ENCODE measurements at regions of chr7 and their contacts with region 1.

Region 1: GRCh38 chr7:44847508-44847920 is 373 bp downstream of the H2AZ2 start:
- DNase-seq: peak; percentile 96
- ATAC-seq: peak; percentile 64
- H3K4me3 ChIP-seq: peak overlapping the region; percentile 67 to 97 (median 76)
- H3K4me3 Mint-ChIP-seq: peak overlapping the region; percentile 99
- H3K27ac ChIP-seq: peak overlapping the region; percentile 94
- H3K27ac Mint-ChIP-seq: peak overlapping the region; percentile 100
- H3K4me1 ChIP-seq: peaks cover 16 to 24% of the 10 kb centered on the region in 2 donors
- H3K4me1 Mint-ChIP-seq: peaks cover 31% of the 10 kb centered on the region
- H3K27me3 ChIP-seq: no peaks in the 10 kb centered on the region
- H3K27me3 Mint-ChIP-seq: no peaks in the 10 kb centered on the region
- CTCF ChIP-seq: peak; percentile 89

Region 2: GRCh38 chr7:44112231-44113000 is 735.1 kb before region 1 on chr7:
- CTCF ChIA-PET with region 1: no interaction called
- POLR2A ChIA-PET with region 1: no interaction called
- intact Hi-C with region 1: no loop called
- DNase-seq: no peak
- ATAC-seq: no peak
- H3K4me3 ChIP-seq: no peak overlapping the region
- H3K4me3 Mint-ChIP-seq: no peak overlapping the region
- H3K27ac ChIP-seq: no peak overlapping the region
- H3K27ac Mint-ChIP-seq: no peak overlapping the region
- H3K4me1 ChIP-seq: no peaks in the 10 kb centered on the region
- H3K4me1 Mint-ChIP-seq: no peaks in the 10 kb centered on the region
- H3K27me3 ChIP-seq: no peaks in the 10 kb centered on the region
- H3K27me3 Mint-ChIP-seq: no peaks in the 10 kb centered on the region
- CTCF ChIP-seq: no peak

Region 3: GRCh38 chr7:44565097-44565794 is 282.3 kb before region 1 on chr7:
- CTCF ChIA-PET with region 1: interaction called, 12 read pairs
- POLR2A ChIA-PET with region 1: no interaction called
- intact Hi-C with region 1: no loop called
- DNase-seq: peak; percentile 73
- ATAC-seq: peak; percentile 98
- H3K4me3 ChIP-seq: no peak overlapping the region
- H3K4me3 Mint-ChIP-seq: no peak overlapping the region
- H3K27ac ChIP-seq: no peak overlapping the region
- H3K27ac Mint-ChIP-seq: no peak overlapping the region
- H3K4me1 ChIP-seq: no peaks in the 10 kb centered on the region
- H3K4me1 Mint-ChIP-seq: no peaks in the 10 kb centered on the region
- H3K27me3 ChIP-seq: no peaks in the 10 kb centered on the region
- H3K27me3 Mint-ChIP-seq: no peaks in the 10 kb centered on the region
- CTCF ChIP-seq: peak; percentile 98

Region 4: GRCh38 chr7:44606450-44607254 is 240.9 kb before region 1 on chr7 and contains the start of gene OGDH:
- CTCF ChIA-PET with region 1: interaction called, 11 read pairs
- POLR2A ChIA-PET with region 1: interaction called, 13 read pairs
- intact Hi-C with region 1: loop called (anchors 1 kb)
- DNase-seq: peak; percentile 100
- ATAC-seq: peak; percentile 91
- H3K4me3 ChIP-seq: peak within 1 kb of the TSS; percentile 80 to 93 (median 85)
- H3K4me3 Mint-ChIP-seq: peak within 1 kb of the TSS; percentile 99
- H3K27ac ChIP-seq: peak within 1 kb of the TSS; percentile 87 to 96
- H3K27ac Mint-ChIP-seq: peak within 1 kb of the TSS; percentile 99
- H3K4me1 ChIP-seq: peaks cover 15 to 34% of the 10 kb centered on the region in 2 donors
- H3K4me1 Mint-ChIP-seq: peaks cover 41% of the 10 kb centered on the region
- H3K27me3 ChIP-seq: no peaks in the 10 kb centered on the region
- H3K27me3 Mint-ChIP-seq: peaks cover 4% of the 10 kb centered on the region
- CTCF ChIP-seq: no peak
- total RNA-seq, gene OGDH: 71.5 and 80.2 TPM in 2 replicates

Region 5: DNA sequence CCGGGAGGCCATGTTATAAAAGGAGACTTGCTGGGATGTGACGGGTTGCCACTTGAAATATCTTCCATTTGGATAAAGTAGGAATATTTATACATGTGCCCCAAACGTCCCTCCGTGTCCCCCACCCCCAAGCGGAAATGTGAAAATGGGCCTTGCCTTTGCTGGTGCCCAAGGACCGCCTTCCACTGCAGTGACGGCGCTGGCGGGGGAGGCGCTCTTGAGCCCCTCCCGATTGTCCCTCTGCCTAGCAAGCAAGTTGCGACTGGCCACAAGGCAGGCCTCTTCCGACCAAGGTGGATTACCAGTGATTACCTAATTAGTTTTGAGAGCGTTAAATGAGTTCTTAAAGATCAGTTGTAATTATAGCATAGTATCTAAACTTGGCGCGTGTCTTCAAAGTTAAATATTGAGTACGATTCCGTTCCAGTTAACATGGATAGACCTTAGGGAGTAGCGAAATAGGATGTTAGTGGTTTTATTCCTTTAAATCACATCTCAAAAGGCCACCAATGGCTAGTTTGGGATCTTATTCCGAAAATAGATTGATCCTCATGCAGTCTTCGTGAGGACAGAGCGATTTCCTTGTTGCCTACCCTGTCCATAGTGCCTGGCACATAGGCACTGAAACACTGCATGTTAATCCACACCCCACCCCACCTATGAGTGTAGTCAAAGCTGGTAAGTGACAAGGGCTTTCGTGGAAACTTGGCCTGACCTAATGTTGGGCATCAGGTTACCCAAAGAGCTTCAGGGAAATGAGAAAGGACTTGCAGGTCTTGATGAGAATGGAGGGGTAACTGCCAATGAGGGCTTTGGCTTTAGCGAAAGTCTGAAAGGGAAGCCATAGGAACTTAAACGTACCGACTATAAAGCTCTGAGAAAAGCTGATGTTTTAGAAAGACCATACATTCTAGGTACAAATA is 49.9 kb before region 1 on chr7:
- CTCF ChIA-PET with region 1: interaction called, 8 read pairs
- POLR2A ChIA-PET with region 1: interaction called, 7 read pairs
- intact Hi-C with region 1: loop called (anchors 1 kb)
- DNase-seq: peak; percentile 87
- ATAC-seq: peak; percentile 49
- H3K4me3 ChIP-seq: peak overlapping the region; percentile 77 to 98 (median 93)
- H3K4me3 Mint-ChIP-seq: peak overlapping the region; percentile 93
- H3K27ac ChIP-seq: peak overlapping the region; percentile 92 to 97
- H3K27ac Mint-ChIP-seq: peak overlapping the region; percentile 98
- H3K4me1 ChIP-seq: peaks cover 15 to 26% of the 10 kb centered on the region in 2 donors
- H3K4me1 Mint-ChIP-seq: peaks cover 40% of the 10 kb centered on the region
- H3K27me3 ChIP-seq: no peaks in the 10 kb centered on the region
- H3K27me3 Mint-ChIP-seq: no peaks in the 10 kb centered on the region
- CTCF ChIP-seq: peak; percentile 73

Region 6: DNA sequence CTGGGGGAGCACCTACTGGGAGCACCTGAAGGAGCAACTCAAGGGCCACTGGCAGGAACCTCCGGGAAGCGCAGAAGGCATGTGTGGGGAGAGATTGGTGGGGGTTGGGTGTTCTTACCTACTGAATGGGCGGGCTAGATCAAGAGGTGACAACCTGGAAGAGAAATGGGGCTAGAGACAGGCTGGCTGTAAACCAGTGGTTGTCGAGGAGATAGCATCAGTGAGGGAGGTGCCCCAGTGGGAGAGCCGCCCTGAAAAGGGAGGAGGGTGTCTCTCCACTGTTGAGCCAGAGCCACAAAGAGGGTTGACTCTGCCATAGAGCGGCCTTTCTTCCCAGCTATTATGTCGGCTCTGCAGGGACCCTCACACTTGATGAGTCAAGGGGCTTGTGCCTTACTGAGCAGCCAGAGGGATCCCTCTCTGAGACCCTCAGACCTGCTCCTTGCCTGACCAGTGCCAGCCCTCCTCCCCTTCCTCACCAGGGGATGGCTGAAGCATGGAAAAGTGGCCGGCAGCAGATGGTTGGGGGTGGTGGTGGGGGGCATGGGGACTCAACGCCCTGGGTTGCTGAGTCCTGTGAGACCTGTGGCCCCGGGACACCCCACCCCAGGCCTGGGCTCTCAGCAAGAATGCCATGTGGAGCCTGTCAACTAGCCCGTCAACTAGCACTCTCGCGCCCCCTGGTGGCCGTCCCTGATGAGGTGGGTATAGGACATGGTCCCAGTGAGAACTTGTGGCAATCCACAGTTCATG is 74.3 kb after region 1 on chr7:
- CTCF ChIA-PET with region 1: interaction called, 15 read pairs
- POLR2A ChIA-PET with region 1: no interaction called
- intact Hi-C with region 1: loop called (anchors 1 kb)
- DNase-seq: peak; percentile 87
- ATAC-seq: peak; percentile 98
- H3K4me3 ChIP-seq: no peak overlapping the region
- H3K4me3 Mint-ChIP-seq: no peak overlapping the region
- H3K27ac ChIP-seq: no peak overlapping the region
- H3K27ac Mint-ChIP-seq: peak overlapping the region; percentile 53
- H3K4me1 ChIP-seq: no peaks in the 10 kb centered on the region
- H3K4me1 Mint-ChIP-seq: peaks cover 2% of the 10 kb centered on the region
- H3K27me3 ChIP-seq: peaks cover 0 to 4% (median 2%) of the 10 kb centered on the region in 4 experiments
- H3K27me3 Mint-ChIP-seq: peaks cover 5% of the 10 kb centered on the region
- CTCF ChIP-seq: peak; percentile 86

Region 7: GRCh38 chr7:45111298-45112223 is 264.0 kb after region 1 on chr7 and contains the start of gene TBRG4:
- CTCF ChIA-PET with region 1: no interaction called
- POLR2A ChIA-PET with region 1: interaction called, 6 read pairs
- intact Hi-C with region 1: loop called (anchors 1 kb)
- DNase-seq: peak; percentile 96
- ATAC-seq: peak; percentile 94
- H3K4me3 ChIP-seq: peak within 1 kb of the TSS; percentile 67 to 93 (median 72)
- H3K4me3 Mint-ChIP-seq: peak within 1 kb of the TSS; percentile 91
- H3K27ac ChIP-seq: peak within 1 kb of the TSS; percentile 91 to 98
- H3K27ac Mint-ChIP-seq: peak within 1 kb of the TSS; percentile 95
- H3K4me1 ChIP-seq: peaks cover 22 to 38% of the 10 kb centered on the region in 2 donors
- H3K4me1 Mint-ChIP-seq: peaks cover 40% of the 10 kb centered on the region
- H3K27me3 ChIP-seq: no peaks in the 10 kb centered on the region
- H3K27me3 Mint-ChIP-seq: no peaks in the 10 kb centered on the region
- CTCF ChIP-seq: no peak
- total RNA-seq, gene TBRG4: 111 and 116 TPM in 2 replicates

Region 8: DNA sequence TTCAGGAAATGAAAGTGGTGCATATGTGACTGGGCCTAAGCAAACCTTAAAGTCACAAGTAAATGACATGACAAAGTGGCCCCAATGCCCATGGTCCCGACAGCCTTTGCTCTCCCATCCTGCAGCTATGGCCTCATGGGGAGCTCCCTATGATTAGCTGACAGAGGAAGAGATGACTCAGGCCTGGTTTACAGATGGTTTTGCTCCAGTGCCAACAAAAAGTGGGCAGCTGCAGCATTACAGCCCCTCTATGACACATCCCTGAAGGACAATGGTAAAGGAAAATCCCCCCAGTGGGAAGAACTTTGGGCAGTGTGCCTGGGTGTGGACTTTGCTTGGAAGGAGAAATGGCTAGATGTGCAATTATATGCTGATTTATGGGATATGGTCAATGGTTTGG is 621.6 kb after region 1 on chr7:
- CTCF ChIA-PET with region 1: no interaction called
- POLR2A ChIA-PET with region 1: no interaction called
- intact Hi-C with region 1: no loop called
- DNase-seq: no peak
- ATAC-seq: no peak
- H3K4me3 ChIP-seq: no peak overlapping the region
- H3K4me3 Mint-ChIP-seq: no peak overlapping the region
- H3K27ac ChIP-seq: no peak overlapping the region
- H3K27ac Mint-ChIP-seq: no peak overlapping the region
- H3K4me1 ChIP-seq: no peaks in the 10 kb centered on the region
- H3K4me1 Mint-ChIP-seq: no peaks in the 10 kb centered on the region
- H3K27me3 ChIP-seq: peaks cover 0 to 6% (median 0%) of the 10 kb centered on the region in 4 experiments
- H3K27me3 Mint-ChIP-seq: peaks cover 31% of the 10 kb centered on the region
- CTCF ChIP-seq: no peak